CD4-positive, alpha-beta memory T cell (primary cell): ENCODE measurements at regions of chr6 and their contacts with region 1.

Region 1: DNA sequence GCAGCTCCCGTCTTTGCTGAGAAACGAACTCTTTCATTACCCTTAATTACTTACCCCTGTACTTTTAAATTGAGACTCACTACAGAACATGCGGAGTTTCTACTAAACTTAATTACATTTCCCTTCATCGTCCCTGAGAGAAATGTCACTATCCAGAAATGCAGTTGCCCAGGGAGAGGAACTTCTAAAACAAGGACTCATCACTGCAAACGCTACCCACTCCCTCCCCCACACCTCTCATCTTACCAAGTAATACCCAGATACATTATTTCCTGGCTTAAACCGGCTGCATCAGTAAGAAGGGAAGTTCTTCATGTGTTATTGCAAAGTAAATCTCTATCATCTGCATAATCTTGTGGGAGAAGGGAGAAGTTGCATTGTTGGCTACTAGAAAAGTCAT is 138.3 kb downstream of the IPCEF1 start:
- DNase-seq: no peak
- H3K4me3 ChIP-seq: no peak overlapping the region
- H3K4me3 Mint-ChIP-seq: peak overlapping the region in 7 of 8 donors; percentile 25 to 85 (median 57)
- H3K27ac ChIP-seq: no peak overlapping the region
- H3K27ac Mint-ChIP-seq: peak overlapping the region; percentile 53 to 90 (median 81)
- H3K4me1 ChIP-seq: peaks cover 54% of the 10 kb centered on the region
- H3K4me1 Mint-ChIP-seq: peaks cover 38 to 53% (median 41%) of the 10 kb centered on the region in 4 donors
- H3K27me3 ChIP-seq: no peaks in the 10 kb centered on the region
- H3K27me3 Mint-ChIP-seq: no peaks in the 10 kb centered on the region

Region 2: DNA sequence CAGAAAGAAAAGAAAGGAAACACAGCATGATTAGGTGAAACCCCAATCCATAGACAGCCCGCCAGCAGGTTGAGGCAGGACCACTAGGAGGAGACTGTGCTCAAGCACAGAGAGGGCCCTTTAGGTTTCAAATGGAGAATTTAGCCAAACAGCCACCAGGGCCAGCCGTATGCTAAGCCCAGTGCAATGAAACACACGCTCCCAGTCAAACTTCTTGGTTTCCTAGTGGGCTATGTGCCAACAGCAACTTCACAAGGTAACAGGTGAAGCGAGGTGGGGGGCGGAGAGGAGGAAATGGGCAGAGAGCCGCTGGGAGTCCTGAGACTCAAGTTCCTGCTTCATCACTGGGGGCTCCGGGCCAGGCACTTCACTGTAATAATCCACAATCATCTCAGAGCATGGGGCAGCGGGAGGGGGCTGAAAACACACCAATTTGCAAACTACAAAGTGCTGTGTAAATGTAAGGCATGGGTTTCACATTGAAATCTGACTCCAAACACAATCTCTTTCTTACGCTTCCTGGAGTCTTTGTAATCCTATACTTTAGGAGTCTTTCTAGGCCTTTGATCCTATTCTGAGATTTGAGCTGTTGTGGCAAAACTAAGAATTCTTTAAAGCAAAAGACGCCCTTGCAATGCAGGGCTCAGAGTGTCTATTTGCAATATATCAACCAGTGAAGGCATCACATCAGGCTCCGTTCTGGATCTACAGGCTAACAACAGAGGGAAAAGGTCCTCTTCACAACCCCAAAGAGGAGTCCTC is 62.0 kb before region 1 on chr6:
- CTCF ChIA-PET with region 1: no interaction called
- POLR2A ChIA-PET with region 1: interaction called, 4 read pairs
- intact Hi-C with region 1: loop called (anchors 5 kb)
- DNase-seq: peak; percentile 48 to 76 (median 56)
- H3K4me3 ChIP-seq: peak overlapping the region; percentile 32 to 46
- H3K4me3 Mint-ChIP-seq: peak overlapping the region; percentile 67 to 92 (median 84)
- H3K27ac ChIP-seq: peak overlapping the region; percentile 72
- H3K27ac Mint-ChIP-seq: peak overlapping the region; percentile 84 to 94 (median 93)
- H3K4me1 ChIP-seq: peaks cover 45% of the 10 kb centered on the region
- H3K4me1 Mint-ChIP-seq: peaks cover 38 to 66% (median 49%) of the 10 kb centered on the region in 4 donors
- H3K27me3 ChIP-seq: no peaks in the 10 kb centered on the region
- H3K27me3 Mint-ChIP-seq: no peaks in the 10 kb centered on the region

Region 3: GRCh38 chr6:154202339-154202738 is 16.0 kb before region 1 on chr6:
- CTCF ChIA-PET with region 1: interaction called, 3 read pairs
- POLR2A ChIA-PET with region 1: no interaction called
- intact Hi-C with region 1: loop called (anchors 2 kb)
- DNase-seq: no peak
- H3K4me3 ChIP-seq: no peak overlapping the region
- H3K4me3 Mint-ChIP-seq: no peak overlapping the region
- H3K27ac ChIP-seq: no peak overlapping the region
- H3K27ac Mint-ChIP-seq: peak overlapping the region in 3 of 7 donors; percentile 17 to 82 (median 35)
- H3K4me1 ChIP-seq: peaks cover 20% of the 10 kb centered on the region
- H3K4me1 Mint-ChIP-seq: peaks cover 39 to 79% (median 56%) of the 10 kb centered on the region in 4 donors
- H3K27me3 ChIP-seq: no peaks in the 10 kb centered on the region
- H3K27me3 Mint-ChIP-seq: no peaks in the 10 kb centered on the region

Region 4: GRCh38 chr6:154229786-154230185 is 11.5 kb after region 1 on chr6:
- CTCF ChIA-PET with region 1: interaction called, 3 read pairs
- POLR2A ChIA-PET with region 1: interaction called, 12 read pairs
- intact Hi-C with region 1: loop called (anchors 2 kb)
- DNase-seq: peak in 4 of 5 donors; percentile 39 to 70 (median 52)
- H3K4me3 ChIP-seq: peak overlapping the region; percentile 52 to 59
- H3K4me3 Mint-ChIP-seq: peak overlapping the region; percentile 86 to 95 (median 90)
- H3K27ac ChIP-seq: peak overlapping the region; percentile 42
- H3K27ac Mint-ChIP-seq: peak overlapping the region; percentile 89 to 96 (median 95)
- H3K4me1 ChIP-seq: peaks cover 75% of the 10 kb centered on the region
- H3K4me1 Mint-ChIP-seq: peaks cover 56 to 85% (median 74%) of the 10 kb centered on the region in 4 donors
- H3K27me3 ChIP-seq: no peaks in the 10 kb centered on the region
- H3K27me3 Mint-ChIP-seq: no peaks in the 10 kb centered on the region